ENCODE measurements at regions of chr3 and their contacts with region 1.

Region 1: GRCh38 chr3:24582431-24583403 is 88.1 kb upstream of the THRB start:
- DNase-seq: peak in 5 of 7 donors; percentile 17 to 34 (median 20)
- H3K4me3 ChIP-seq: no peak overlapping the region
- H3K27ac ChIP-seq: no peak overlapping the region
- H3K4me1 ChIP-seq: no peaks in the 10 kb centered on the region
- H3K27me3 ChIP-seq: peaks cover 10% of the 10 kb centered on the region
- CTCF ChIP-seq: peak; percentile 25 to 59 (median 50)
- POLR2A ChIP-seq: no peak

Region 2: GRCh38 chr3:24521420-24522145 is 61.1 kb before region 1 on chr3:
- intact Hi-C with region 1: loop called in 1 of 2 experiments (anchors 10 kb)
- DNase-seq: peak; percentile 61 to 76 (median 73)
- H3K4me3 ChIP-seq: peak overlapping the region in 3 of 4 donors; percentile 23 to 99 (median 46)
- H3K27ac ChIP-seq: peak overlapping the region; percentile 37 to 92 (median 64)
- H3K4me1 ChIP-seq: peaks cover 4 to 7% of the 10 kb centered on the region in 2 donors
- H3K27me3 ChIP-seq: no peaks in the 10 kb centered on the region
- CTCF ChIP-seq: no peak
- POLR2A ChIP-seq: peak in 1 of 2 donors; percentile 66